Panc1 (cell line): ENCODE measurements at regions of chr12 and their contacts with region 1.

Region 1: GRCh38 chr12:69442894-69443293 is 27.3 kb upstream of the FRS2 start:
- DNase-seq: peak; percentile 24
- ATAC-seq: peak; percentile 77
- H3K4me3 ChIP-seq: no peak overlapping the region
- H3K27ac ChIP-seq: no peak overlapping the region
- H3K4me1 ChIP-seq: no peaks in the 10 kb centered on the region
- H3K27me3 ChIP-seq: no peaks in the 10 kb centered on the region
- CTCF ChIP-seq: no peak

Region 2: GRCh38 chr12:69459477-69459876 is 16.6 kb after region 1 on chr12:
- CTCF ChIA-PET with region 1: no interaction called
- POLR2A ChIA-PET with region 1: interaction called, 14 read pairs
- in situ Hi-C with region 1: no loop called
- intact Hi-C with region 1: no loop called
- DNase-seq: no peak
- ATAC-seq: no peak
- H3K4me3 ChIP-seq: no peak overlapping the region
- H3K27ac ChIP-seq: no peak overlapping the region
- H3K4me1 ChIP-seq: no peaks in the 10 kb centered on the region
- H3K27me3 ChIP-seq: no peaks in the 10 kb centered on the region
- CTCF ChIP-seq: no peak

Region 3: GRCh38 chr12:69470189-69471075 is 27.5 kb after region 1 on chr12 and contains the start of gene FRS2:
- CTCF ChIA-PET with region 1: no interaction called
- POLR2A ChIA-PET with region 1: no interaction called
- in situ Hi-C with region 1: no loop called
- intact Hi-C with region 1: no loop called
- DNase-seq: peak; percentile 38
- ATAC-seq: peak; percentile 99
- H3K4me3 ChIP-seq: peak within 1 kb of the TSS; percentile 80 to 94
- H3K27ac ChIP-seq: peak within 1 kb of the TSS; percentile 99
- H3K4me1 ChIP-seq: peaks cover 38% of the 10 kb centered on the region
- H3K27me3 ChIP-seq: no peaks in the 10 kb centered on the region
- CTCF ChIP-seq: peak; percentile 62; the same call in 1 of the 2 replicates
- total RNA-seq, gene FRS2: 26.6 TPM

Region 4: DNA sequence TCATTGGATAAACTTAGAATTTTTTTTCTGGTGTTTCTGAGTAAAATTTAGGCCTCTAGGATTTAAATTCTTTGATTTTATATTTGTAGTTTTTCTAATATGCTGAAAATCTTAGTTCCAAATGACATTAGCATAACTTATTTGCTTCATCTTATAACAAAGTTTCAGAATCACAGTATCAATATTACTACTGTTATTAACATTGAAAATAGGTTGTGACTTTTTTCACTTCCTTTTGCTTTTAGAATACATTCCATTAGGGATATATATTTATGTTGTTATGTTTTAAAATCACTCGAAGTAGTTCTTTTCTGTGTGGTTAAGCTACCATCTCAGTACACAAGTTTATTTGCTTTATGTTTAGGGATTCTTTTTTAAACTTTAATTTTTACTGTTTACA is 308.6 kb after region 1 on chr12:
- CTCF ChIA-PET with region 1: no interaction called
- POLR2A ChIA-PET with region 1: no interaction called
- in situ Hi-C with region 1: no loop called
- intact Hi-C with region 1: no loop called
- DNase-seq: no peak
- ATAC-seq: no peak
- H3K4me3 ChIP-seq: no peak overlapping the region
- H3K27ac ChIP-seq: no peak overlapping the region
- H3K4me1 ChIP-seq: no peaks in the 10 kb centered on the region
- H3K27me3 ChIP-seq: no peaks in the 10 kb centered on the region
- CTCF ChIP-seq: no peak